ENCODE measurements at regions of chr2 and their contacts with region 1.

Region 1: DNA sequence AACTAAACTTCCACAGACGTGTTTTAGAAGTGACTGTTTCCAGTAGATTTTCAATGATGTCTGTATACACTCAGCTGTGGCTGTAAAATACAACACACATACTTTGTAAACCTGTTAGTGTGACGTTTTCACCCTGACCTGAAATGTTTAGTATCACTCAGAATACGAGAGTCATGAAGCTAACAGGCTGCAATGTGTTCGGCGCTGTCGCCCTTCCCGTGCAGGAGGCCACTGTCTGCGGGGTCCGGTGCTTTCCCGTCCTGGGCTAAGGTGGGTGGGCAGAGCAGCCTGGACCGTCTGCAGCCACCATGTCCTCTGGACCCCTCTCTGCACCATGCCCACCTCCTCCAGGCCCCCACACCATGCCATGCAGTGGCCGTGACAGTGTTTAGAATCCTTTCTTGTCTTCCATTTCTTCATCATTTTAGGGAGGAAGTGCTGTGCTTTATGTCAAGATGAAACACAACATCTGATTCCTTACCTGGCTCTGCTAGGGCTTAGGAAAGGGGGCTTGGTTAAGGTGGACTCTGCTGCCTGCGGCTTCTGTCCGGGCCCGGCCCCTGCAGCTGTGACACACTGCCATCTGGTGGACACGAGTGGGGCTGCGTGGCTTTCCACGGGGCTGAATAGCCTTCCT is 53.8 kb upstream of the RBM44 start:
- DNase-seq: peak; percentile 95

Region 2: DNA sequence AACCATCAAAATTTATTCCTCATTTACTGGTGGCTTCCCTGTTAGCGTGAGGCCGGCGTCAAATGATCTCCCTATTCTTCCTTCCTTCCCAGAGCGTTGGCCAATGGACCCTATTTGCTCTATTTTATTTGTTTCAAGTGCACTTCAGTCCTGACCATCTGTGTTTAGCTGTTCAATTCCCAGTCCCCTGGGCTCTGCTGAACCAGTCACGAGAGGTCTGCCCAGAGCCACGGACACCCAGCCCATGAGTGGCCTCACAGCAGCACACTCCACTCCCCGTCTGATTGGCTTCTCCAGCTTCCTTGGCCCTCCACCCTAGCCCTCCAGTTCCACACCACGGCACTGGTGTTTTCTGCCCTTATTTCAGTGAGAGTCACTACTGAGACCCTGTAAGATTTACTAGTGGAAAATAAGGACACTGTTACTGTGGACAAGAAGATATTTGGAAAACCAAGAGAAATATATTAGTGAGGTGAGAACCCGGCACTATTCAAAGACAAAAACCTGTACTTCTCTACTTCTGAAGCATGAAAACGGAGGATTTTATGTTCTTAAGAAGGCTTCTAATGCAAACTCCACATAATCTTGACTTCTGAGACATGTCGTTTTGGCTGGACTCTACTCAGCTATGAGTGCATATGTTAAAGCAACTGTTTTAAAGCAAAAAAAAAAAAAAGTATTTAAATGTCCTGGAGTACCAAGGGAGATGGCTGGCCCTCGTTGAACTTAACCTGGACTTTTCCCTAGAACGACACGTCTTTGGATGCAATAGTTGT is 417.4 kb before region 1 on chr2:
- intact Hi-C with region 1: no loop called
- DNase-seq: peak; percentile 37

Region 3: DNA sequence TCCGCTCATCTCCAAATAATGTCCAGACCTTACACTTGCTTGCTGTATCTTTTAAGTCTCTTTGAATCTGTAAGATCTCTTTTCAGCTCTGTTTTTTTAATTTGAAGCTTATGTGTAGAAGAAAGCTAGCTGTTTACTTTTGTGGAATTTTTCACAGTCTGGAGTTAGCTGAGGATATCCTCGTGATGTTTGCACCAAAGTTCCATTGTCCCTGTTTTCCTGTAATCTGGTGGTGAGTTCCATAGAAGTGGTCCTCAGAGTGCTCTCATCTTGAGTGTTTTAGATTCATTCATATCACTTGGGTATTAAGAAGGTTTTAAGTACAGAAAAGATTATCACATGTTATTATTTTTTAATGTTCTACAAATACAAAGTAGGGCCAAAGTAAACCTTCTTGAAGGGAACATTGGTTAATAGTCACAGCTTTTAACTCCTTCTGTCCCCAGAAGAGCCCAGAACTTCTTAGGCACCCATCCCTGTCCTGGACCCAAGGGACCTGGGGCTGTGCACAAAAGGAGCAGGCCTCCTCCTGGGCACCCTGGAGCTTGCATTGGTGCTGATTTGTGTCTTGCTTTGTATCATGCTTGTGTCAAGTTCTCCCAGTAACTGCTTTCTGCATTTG is 242.7 kb before region 1 on chr2:
- intact Hi-C with region 1: no loop called
- DNase-seq: no peak

Region 4: GRCh38 chr2:237590272-237591140 is 154.2 kb before region 1 on chr2 and contains the start of gene RAB17:
- intact Hi-C with region 1: loop called (anchors 5 to 10 kb)
- DNase-seq: peak; percentile 79
- total RNA-seq, gene RAB17: 2.0 to 2.7 TPM

Region 5: DNA sequence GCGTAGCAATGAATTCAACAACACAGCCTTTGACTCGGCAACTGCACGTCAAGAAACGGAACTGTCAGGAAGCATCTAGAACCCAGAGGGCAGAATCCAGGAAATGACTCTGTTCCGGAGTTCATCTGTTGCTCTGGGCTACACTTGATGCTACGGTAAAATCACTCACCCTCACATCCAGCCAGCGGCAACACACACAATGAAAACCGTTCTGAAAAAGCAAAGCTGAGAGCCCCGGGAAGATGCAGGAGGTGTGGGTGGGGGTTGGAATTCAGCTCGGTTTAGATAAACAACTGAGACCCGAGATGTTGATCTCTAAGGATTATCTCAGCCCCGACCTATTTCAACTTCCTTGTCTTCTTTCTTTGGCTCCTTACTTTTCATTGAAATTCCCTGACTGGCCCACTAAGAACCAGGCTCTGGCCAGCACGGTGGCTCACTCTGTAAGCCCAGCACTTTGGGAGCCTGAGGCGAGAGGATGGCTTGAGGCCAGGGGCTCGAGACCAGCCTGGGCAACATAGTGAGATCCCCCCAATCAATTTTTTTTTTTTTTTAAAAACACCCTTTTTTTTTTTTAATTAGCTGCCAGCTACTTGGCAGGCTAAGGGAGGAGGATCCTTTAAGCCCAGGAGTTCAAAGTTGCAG is 140.9 kb before region 1 on chr2:
- intact Hi-C with region 1: loop called (anchors 5 to 10 kb)
- DNase-seq: peak; percentile 74

Region 6: DNA sequence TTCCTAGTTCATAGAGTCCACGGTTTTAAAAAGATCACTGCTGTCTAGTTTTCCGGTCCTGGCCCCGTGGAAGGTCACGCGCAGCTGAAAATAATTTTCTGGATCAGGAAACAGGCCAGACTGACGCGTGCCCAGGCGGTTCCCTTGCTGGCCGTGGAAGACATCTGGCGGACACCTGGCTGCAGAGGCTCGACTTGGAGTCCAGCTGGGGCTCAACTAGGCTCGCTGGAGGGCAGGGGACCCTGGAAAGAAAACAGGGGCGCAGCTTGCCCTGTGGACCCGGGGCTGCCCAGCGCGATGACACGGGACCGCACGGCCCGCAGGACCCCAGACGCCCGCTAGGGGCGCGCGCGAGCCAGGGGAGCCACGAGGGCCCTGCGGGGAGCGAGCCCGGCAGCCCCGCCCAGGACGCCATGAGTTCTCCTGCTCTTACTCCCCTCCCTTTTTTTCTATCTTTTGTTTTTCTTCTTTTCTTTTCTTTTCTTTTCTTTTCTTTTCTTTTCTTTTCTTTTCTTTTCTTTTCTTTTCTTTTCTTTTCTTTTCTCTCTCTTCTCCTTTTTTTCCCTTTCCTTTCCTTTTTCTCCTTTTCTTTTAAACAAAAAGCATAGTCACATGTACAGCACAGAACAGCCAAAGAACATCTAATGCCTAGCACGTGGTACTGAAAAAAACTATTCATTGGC is 178.9 kb after region 1 on chr2:
- intact Hi-C with region 1: no loop called
- DNase-seq: peak; percentile 95